Activated CD4-positive, alpha-beta T cell treated with anti-CD3 and anti-CD28 coated beads for 36 hours (primary cell): ENCODE measurements at regions of chr7 and their contacts with region 1.

Region 1: GRCh38 chr7:25093268-25093826 is 31.7 kb downstream of the CYCS start:
- DNase-seq: peak; percentile 90
- ATAC-seq: peak; percentile 91
- H3K4me3 Mint-ChIP-seq: no peak overlapping the region
- H3K27ac Mint-ChIP-seq: no peak overlapping the region
- H3K4me1 Mint-ChIP-seq: peaks cover 12% of the 10 kb centered on the region
- H3K27me3 Mint-ChIP-seq: peaks cover 2% of the 10 kb centered on the region

Region 2: GRCh38 chr7:24290004-24290641 is 803.2 kb before region 1 on chr7:
- CTCF ChIA-PET with region 1: interaction called, 3 read pairs
- POLR2A ChIA-PET with region 1: no interaction called
- intact Hi-C with region 1: loop called (anchors 1 to 10 kb)
- DNase-seq: peak; percentile 81
- ATAC-seq: peak; percentile 99
- H3K4me3 Mint-ChIP-seq: no peak overlapping the region
- H3K27ac Mint-ChIP-seq: no peak overlapping the region
- H3K4me1 Mint-ChIP-seq: peaks cover 10% of the 10 kb centered on the region
- H3K27me3 Mint-ChIP-seq: peaks cover 32% of the 10 kb centered on the region

Region 3: DNA sequence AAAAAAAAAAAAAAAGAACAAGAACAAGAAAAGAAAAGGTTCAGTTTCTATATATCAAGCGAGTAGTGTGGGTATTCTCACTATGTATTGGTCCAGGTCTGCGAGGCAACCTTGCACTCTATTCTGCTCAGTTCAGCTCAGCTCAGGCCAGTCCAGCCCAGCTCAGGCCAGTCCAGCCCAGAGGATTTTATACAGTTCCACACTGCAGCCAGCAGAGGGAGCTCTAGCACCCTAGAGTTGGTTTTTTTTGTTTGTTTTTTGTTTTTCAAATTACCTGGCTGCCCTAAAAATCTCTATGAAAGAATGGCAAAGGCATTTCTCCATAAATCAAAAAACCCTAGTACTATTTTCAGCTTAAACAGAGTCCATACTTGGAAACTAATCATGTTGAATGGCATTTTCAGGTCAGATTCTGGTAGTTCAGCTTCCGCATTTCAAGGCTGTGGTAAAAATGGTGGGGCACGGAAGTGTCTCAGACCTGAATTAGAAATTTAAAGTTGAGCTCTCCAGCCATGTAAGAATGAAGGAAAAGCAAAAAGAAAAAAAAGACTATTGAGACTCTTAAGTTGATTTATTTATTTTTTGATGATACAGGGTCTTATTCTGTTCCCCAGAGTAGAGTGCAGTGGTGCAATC is 280.9 kb before region 1 on chr7:
- CTCF ChIA-PET with region 1: interaction called, 152 read pairs
- POLR2A ChIA-PET with region 1: no interaction called
- intact Hi-C with region 1: loop called (anchors 1 kb)
- DNase-seq: peak; percentile 68
- ATAC-seq: peak; percentile 69
- H3K4me3 Mint-ChIP-seq: no peak overlapping the region
- H3K27ac Mint-ChIP-seq: no peak overlapping the region
- H3K4me1 Mint-ChIP-seq: no peaks in the 10 kb centered on the region
- H3K27me3 Mint-ChIP-seq: no peaks in the 10 kb centered on the region

Region 4: GRCh38 chr7:25069900-25070443 is 23.4 kb before region 1 on chr7:
- CTCF ChIA-PET with region 1: interaction called, 57 read pairs
- POLR2A ChIA-PET with region 1: no interaction called
- intact Hi-C with region 1: loop called in 1 of 2 experiments (anchors 2 kb)
- DNase-seq: peak; percentile 66
- ATAC-seq: peak; percentile 53
- H3K4me3 Mint-ChIP-seq: no peak overlapping the region
- H3K27ac Mint-ChIP-seq: no peak overlapping the region
- H3K4me1 Mint-ChIP-seq: peaks cover 12% of the 10 kb centered on the region
- H3K27me3 Mint-ChIP-seq: no peaks in the 10 kb centered on the region

Region 5: DNA sequence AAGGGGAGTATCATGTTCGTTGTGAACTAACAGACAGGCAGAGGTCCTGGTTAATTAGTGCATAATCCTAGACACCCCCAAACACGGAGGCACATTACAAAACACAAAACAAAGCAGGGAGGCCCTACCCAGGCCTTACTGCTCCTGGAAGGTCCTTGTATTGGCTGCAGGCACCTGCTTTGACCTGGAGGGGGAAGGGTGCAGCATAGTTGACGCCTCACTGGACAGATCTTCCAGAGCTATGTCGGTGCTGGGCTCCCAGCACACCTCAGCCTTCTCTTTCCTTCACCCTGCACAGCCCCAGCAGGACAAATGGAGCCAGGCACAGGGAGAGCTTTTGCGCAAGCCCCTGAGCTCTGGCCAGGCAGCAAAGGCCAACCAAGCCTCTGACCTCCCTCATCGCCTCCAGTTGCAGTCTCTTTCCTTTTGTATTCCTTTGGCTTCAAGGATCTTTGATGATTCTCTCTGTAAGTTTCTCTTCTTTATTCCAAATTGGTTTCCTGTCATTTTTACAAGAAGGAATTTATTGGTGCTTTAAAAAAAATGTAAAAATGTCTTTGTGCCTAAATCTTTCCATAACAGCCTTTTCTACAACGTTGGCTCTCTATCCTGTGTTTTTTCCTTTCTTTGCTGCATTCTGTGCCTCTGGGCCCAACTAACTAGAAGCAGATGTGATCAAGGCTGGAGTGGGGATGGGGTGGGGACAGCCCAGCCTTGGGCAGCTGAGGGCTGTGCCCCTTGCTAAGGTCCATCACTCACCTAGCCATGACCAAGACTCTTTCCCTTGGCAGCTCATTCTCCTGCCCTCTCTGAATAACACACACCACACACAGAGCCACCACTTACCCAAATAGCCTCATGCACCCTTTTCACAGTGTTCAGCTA is 452.0 kb after region 1 on chr7:
- CTCF ChIA-PET with region 1: no interaction called
- POLR2A ChIA-PET with region 1: no interaction called
- intact Hi-C with region 1: no loop called
- DNase-seq: no peak
- ATAC-seq: no peak
- H3K4me3 Mint-ChIP-seq: no peak overlapping the region
- H3K27ac Mint-ChIP-seq: no peak overlapping the region
- H3K4me1 Mint-ChIP-seq: no peaks in the 10 kb centered on the region
- H3K27me3 Mint-ChIP-seq: peaks cover 16% of the 10 kb centered on the region